HAP-1 (cell line): ENCODE measurements at regions of chr7 and their contacts with region 1.

Region 1: GRCh38 chr7:140003913-140004382 is 58.8 kb downstream of the PARP12 start:
- DNase-seq: peak; percentile 65 to 75
- H3K4me3 ChIP-seq: no peak overlapping the region
- H3K4me1 ChIP-seq: no peaks in the 10 kb centered on the region
- H3K27me3 ChIP-seq: no peaks in the 10 kb centered on the region

Region 2: DNA sequence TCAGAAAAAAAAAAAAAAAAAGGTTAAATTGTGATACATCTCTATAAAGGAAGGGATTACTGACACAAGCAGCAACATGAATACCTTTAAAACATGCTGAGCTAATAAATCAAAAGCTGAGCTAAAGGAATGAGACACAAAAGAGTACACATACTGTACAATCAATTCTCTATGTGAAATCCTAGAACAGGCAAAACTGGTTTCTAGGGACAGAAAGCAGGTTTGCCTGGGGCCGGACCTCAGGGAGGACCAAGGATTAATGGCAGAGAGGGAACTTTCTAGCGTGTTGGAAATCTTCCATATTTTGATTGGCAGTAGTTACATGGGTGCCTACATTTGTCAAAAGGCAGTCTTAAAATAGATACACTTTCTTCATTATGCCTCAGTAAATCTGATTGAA is 572.9 kb before region 1 on chr7:
- in situ Hi-C with region 1: loop called (anchors 10 kb)
- DNase-seq: peak; percentile 64 to 85
- H3K4me3 ChIP-seq: no peak overlapping the region
- H3K4me1 ChIP-seq: peaks cover 29% of the 10 kb centered on the region
- H3K27me3 ChIP-seq: no peaks in the 10 kb centered on the region; the same call in 1 of the 2 replicates

Region 3: GRCh38 chr7:139502226-139502625 is 501.7 kb before region 1 on chr7:
- in situ Hi-C with region 1: loop called (anchors 5 kb)
- DNase-seq: no peak
- H3K4me3 ChIP-seq: no peak overlapping the region
- H3K4me1 ChIP-seq: no peaks in the 10 kb centered on the region; the same call in 1 of the 2 replicates
- H3K27me3 ChIP-seq: no peaks in the 10 kb centered on the region

Region 4: GRCh38 chr7:139643951-139644585 is 359.9 kb before region 1 on chr7:
- in situ Hi-C with region 1: loop called (anchors 5 kb)
- DNase-seq: no peak
- H3K4me3 ChIP-seq: no peak overlapping the region
- H3K4me1 ChIP-seq: no peaks in the 10 kb centered on the region
- H3K27me3 ChIP-seq: no peaks in the 10 kb centered on the region

Region 5: DNA sequence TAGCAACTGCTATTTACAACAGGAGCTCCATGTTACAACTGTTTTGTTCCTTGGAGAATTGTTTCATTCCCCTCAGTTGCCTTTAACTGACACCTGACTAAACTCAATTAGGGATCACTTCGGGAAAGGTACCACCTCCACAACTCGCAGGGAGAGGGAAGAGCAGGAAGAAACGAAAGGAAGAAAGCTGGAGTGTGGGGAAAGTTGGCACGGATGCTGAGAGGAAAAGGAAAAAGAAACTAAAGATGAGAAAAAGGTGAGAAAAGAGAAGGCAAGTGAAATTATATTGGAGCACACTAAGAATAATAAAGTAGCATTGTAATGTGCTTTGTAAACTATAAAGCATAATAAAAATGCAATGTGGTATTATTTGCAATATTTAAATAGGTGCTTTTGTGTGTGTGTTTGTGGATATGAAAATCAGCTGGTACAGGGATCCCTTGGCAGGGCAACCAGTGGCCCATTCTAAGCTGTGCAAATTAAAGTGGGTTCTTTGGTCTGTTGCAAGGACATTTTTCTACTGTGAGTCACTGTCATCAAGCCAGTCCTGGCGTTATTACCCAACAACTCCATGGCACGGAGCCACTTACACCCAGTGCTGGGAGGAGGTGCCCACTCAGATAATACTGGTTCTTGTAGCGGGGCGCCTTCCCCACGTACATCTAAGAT is 272.0 kb before region 1 on chr7:
- in situ Hi-C with region 1: no loop called
- DNase-seq: no peak
- H3K4me3 ChIP-seq: no peak overlapping the region
- H3K4me1 ChIP-seq: no peaks in the 10 kb centered on the region
- H3K27me3 ChIP-seq: no peaks in the 10 kb centered on the region

Region 6: DNA sequence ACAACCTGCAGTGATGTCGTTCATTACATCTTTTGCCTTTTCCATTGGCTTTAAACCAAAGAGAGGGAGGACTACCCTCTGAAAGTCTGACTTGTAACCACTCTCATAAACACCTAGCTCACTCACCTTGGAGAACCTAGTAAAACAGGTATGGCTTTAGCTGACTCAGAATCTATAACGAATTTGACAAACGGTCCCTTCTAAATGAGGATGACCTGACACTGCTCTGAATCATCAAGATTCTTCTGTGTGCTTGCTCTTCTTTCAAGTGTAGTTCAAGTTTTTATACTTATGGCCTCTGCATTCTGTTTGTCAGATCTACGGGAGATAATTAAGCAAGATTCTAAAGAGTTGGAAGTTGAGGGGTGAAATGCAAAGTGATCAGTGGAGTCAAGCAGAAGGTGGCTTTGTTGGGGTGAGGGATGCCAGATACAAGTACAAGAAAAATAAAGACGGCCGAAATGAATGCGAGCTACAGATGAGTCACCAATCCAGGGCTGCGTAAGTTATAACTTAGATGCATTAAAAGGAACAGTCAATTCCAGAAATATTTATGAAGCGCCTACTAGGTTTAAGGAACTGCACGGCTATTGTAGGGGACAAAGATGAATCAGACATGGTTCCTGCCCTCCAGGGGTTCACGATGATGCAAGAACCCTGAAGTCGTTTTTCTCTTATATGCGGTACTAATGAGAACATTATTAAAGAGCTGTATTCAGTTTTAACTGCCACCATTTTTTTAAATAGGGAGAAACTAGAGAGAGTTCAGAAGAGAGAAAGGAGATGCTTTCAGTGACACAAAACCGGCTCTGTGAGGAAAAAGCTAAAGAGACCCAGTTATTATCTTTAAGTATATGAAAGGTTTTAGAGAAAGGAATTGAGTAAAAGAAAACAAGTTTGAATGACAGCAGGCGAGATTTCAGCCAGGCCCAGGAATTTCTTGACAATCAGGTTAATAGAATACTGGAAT is 232.7 kb before region 1 on chr7:
- in situ Hi-C with region 1: loop called (anchors 5 kb)
- DNase-seq: no peak
- H3K4me3 ChIP-seq: no peak overlapping the region
- H3K4me1 ChIP-seq: no peaks in the 10 kb centered on the region
- H3K27me3 ChIP-seq: no peaks in the 10 kb centered on the region